GM12878 (cell line): ENCODE measurements at regions of chr16 and their contacts with region 1.

Region 1: DNA sequence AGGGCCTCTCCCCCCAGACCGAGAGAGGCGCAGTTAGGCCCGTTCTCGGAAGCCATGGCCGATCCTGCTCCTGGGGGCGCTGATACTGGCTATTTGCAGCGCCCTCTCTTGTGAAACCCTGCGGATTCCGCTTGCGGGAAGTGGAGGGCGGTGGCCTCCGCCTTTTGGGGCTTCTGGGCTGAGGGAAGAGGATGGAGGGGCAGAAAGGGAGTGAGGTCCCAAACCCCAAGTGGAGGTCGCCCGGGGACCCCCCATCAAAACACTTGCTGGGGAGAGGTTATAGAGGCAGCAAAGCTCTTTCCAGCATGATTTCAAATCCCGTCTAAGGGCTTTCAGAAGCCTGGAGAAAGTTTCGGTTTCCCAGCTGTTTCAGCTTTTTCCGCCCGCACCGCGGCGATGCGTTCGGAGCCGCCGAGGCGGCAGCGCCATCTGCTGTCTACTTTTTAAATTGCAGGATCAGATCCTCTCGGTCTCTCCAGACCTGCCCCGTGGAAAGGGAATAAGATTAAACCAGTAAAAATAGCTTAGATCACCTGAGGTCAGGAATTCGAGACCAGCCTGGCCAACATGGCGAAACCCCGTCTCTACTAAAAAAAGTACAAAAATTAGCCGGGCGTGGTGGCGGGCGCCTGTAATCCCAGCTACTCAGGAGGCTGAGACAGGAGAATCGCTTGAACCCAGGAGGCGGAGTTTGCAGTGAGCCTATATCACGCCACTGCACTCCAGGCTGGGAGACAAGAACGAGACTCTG is 15.8 kb downstream of the SNX20 start:
- DNase-seq: no peak
- ATAC-seq: peak; percentile 68
- H3K4me3 ChIP-seq: no peak overlapping the region
- H3K27ac ChIP-seq: no peak overlapping the region
- H3K4me1 ChIP-seq: peaks cover 19% of the 10 kb centered on the region
- H3K27me3 ChIP-seq: no peaks in the 10 kb centered on the region
- CTCF ChIP-seq: peak; percentile 77 to 91 (median 86)
- EP300 ChIP-seq: no peak
- POLR2A ChIP-seq: no peak
- RAD21 ChIP-seq: peak; percentile 83

Region 2: GRCh38 chr16:50354629-50355456 is 310.5 kb before region 1 on chr16:
- CTCF ChIA-PET with region 1: interaction called, 41 read pairs
- POLR2A ChIA-PET with region 1: no interaction called
- RAD21 ChIA-PET with region 1: interaction called, 7 read pairs
- SMC1A ChIA-PET with region 1: interaction called, 11 read pairs
- in situ Hi-C with region 1: no loop called
- intact Hi-C with region 1: no loop called
- DNase-seq: no peak
- ATAC-seq: no peak
- H3K4me3 ChIP-seq: no peak overlapping the region
- H3K27ac ChIP-seq: no peak overlapping the region
- H3K4me1 ChIP-seq: no peaks in the 10 kb centered on the region
- H3K27me3 ChIP-seq: no peaks in the 10 kb centered on the region
- CTCF ChIP-seq: peak; percentile 31 to 52 (median 50); a peak in 4 of 6 replicates
- EP300 ChIP-seq: no peak
- POLR2A ChIP-seq: no peak
- RAD21 ChIP-seq: no peak

Region 3: GRCh38 chr16:50377001-50377400 is 288.3 kb before region 1 on chr16:
- CTCF ChIA-PET with region 1: interaction called, 6 read pairs
- POLR2A ChIA-PET with region 1: no interaction called
- RAD21 ChIA-PET with region 1: interaction called, 3 read pairs
- SMC1A ChIA-PET with region 1: interaction called, 8 read pairs
- in situ Hi-C with region 1: no loop called
- intact Hi-C with region 1: loop called (anchors 2 kb)
- DNase-seq: no peak
- ATAC-seq: no peak
- H3K4me3 ChIP-seq: no peak overlapping the region
- H3K27ac ChIP-seq: no peak overlapping the region
- H3K4me1 ChIP-seq: no peaks in the 10 kb centered on the region
- H3K27me3 ChIP-seq: no peaks in the 10 kb centered on the region
- CTCF ChIP-seq: no peak
- EP300 ChIP-seq: no peak
- POLR2A ChIP-seq: no peak
- RAD21 ChIP-seq: no peak

Region 4: DNA sequence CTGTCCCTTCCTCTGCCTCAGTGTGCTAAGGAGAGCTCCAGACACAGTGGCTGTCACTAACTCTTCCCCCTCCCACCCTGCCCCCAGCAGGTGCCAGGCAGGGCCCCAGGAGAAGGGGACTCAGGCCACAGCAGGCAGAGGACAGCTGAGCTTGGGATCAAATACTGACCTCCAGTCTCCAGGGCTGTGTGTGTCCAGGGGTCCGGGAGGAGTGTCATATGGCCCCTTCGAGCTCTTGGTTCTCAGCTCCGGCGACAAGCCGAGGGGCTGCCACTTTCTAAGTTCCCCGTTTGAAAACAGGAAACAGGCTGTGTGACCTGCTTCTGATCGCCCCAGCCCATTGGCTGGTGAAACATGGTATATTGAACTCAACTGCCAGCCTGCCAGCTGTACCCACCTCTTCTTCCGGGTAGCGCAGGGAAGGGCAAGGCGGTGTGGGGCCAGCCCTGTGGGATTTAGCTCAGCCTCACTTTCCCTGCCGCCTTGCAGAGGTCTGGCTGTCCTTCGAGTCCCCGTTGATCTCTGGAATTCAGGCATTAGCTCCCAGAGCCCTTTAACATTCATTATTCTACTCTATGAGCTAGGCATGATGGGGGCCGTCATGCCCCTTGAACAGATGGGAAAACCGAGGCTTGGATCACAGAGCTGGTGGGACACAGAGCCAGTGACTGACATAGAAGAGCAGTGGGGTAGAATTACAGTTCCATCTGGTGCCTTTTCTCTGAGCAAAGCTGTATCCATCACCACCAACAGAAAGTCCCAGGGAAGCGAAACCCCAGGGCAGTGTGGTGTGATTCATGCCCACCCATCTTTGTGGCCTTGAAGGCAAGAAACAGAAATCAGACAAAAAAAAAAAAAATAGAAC is 15.9 kb after region 1 on chr16 and contains the start of gene SNX20:
- CTCF ChIA-PET with region 1: interaction called, 257 read pairs
- POLR2A ChIA-PET with region 1: interaction called, 22 read pairs
- RAD21 ChIA-PET with region 1: interaction called, 78 read pairs
- SMC1A ChIA-PET with region 1: interaction called, 112 read pairs
- in situ Hi-C with region 1: no loop called
- intact Hi-C with region 1: no loop called
- DNase-seq: peak; percentile 63
- ATAC-seq: peak; percentile 65
- H3K4me3 ChIP-seq: peak within 1 kb of the TSS; percentile 72
- H3K27ac ChIP-seq: peak within 1 kb of the TSS; percentile 84
- H3K4me1 ChIP-seq: peaks cover 50% of the 10 kb centered on the region
- H3K27me3 ChIP-seq: no peaks in the 10 kb centered on the region
- CTCF ChIP-seq: no peak
- EP300 ChIP-seq: no peak
- POLR2A ChIP-seq: peak; percentile 68
- RAD21 ChIP-seq: no peak
- polyA plus RNA-seq, gene SNX20: 4.6 to 6.9 TPM

Region 5: DNA sequence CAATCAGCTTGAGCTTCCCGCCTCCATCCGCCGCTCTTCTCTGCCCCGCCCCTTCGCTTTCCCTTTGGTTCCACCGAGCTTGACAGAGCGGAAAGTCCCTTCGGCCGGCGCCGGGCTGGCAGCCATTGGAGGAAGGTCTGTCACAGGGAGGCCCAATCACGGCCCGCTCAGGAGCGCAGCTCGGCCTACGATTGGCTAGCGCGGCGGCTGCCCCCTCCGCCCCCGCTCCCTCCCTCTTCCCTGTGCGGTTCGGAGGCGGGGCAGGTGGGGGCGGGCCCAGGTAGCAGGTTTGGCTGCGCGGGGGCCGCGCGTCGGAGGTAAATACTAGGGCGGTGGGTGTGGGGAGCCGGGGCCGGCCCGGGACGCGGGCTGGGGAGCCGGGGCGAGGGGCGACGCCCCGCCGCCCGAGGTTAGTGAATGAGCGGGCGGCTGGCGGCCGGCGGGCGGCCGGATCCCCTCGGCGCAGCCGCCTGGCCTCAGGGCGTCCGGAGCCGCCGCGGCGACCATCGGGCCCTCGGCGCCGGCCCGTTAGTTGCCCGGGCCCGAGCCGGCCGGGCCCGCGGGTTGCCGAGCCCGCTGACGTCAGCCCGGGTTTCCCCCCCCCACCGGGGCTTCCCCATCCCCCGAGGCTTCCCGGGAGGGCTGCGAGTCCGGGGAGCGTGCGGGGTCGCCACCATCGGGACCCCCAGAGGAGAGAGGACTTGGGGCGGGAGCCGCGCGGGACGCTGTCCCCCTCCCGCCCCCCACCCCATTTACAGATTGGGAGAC is 76.7 kb after region 1 on chr16 and contains the start of gene CYLD:
- CTCF ChIA-PET with region 1: interaction called, 636 read pairs
- POLR2A ChIA-PET with region 1: interaction called, 10 read pairs
- RAD21 ChIA-PET with region 1: interaction called, 578 read pairs
- SMC1A ChIA-PET with region 1: interaction called, 600 read pairs
- in situ Hi-C with region 1: no loop called
- intact Hi-C with region 1: loop called (anchors 1 kb)
- DNase-seq: peak; percentile 95
- ATAC-seq: peak; percentile 95
- H3K4me3 ChIP-seq: peak within 1 kb of the TSS; percentile 84
- H3K27ac ChIP-seq: peak within 1 kb of the TSS; percentile 98
- H3K4me1 ChIP-seq: peaks cover 21% of the 10 kb centered on the region
- H3K27me3 ChIP-seq: no peaks in the 10 kb centered on the region
- CTCF ChIP-seq: no peak
- EP300 ChIP-seq: no peak
- POLR2A ChIP-seq: peak; percentile 36
- RAD21 ChIP-seq: no peak
- polyA plus RNA-seq, gene CYLD: 19.2 to 27.0 TPM

Region 6: DNA sequence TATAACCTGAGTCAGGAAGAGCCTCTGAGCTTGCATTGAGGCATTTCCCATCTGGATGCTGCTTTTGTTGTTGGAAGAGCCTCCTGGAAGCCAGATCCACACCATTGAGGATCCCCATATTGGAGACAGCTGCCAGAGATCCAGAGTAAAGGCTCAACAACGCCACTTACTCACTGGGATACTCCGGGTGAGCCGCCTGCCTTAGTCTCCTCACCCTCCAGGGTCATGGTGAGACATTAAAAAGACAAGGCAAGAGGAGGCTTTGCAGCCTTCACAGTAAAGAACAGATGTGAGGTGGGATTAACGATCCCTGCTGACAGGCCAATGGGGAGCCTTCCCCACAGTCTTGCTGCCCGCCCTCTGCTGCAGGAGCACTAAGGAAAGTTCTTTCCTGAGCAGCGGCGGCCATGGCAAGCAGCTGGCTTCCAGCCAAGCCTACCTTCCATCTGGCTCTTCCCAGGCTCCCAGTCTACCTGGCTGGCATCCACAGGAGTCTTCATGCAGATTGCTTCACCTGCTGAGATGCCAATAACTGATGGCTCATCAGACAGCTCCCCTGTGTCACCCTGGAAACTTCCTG is 275.1 kb after region 1 on chr16:
- CTCF ChIA-PET with region 1: no interaction called
- POLR2A ChIA-PET with region 1: no interaction called
- RAD21 ChIA-PET with region 1: no interaction called
- SMC1A ChIA-PET with region 1: no interaction called
- in situ Hi-C with region 1: no loop called
- intact Hi-C with region 1: no loop called
- DNase-seq: no peak
- ATAC-seq: no peak
- H3K4me3 ChIP-seq: no peak overlapping the region
- H3K27ac ChIP-seq: no peak overlapping the region
- H3K4me1 ChIP-seq: no peaks in the 10 kb centered on the region
- H3K27me3 ChIP-seq: peaks cover 0 to 3% of the 10 kb centered on the region in 2 experiments; a peak in 2 of 4 replicates
- CTCF ChIP-seq: no peak
- EP300 ChIP-seq: no peak
- POLR2A ChIP-seq: no peak
- RAD21 ChIP-seq: no peak